GM10248 (cell line): ENCODE measurements at regions of chr9 and their contacts with region 1.

Region 1: DNA sequence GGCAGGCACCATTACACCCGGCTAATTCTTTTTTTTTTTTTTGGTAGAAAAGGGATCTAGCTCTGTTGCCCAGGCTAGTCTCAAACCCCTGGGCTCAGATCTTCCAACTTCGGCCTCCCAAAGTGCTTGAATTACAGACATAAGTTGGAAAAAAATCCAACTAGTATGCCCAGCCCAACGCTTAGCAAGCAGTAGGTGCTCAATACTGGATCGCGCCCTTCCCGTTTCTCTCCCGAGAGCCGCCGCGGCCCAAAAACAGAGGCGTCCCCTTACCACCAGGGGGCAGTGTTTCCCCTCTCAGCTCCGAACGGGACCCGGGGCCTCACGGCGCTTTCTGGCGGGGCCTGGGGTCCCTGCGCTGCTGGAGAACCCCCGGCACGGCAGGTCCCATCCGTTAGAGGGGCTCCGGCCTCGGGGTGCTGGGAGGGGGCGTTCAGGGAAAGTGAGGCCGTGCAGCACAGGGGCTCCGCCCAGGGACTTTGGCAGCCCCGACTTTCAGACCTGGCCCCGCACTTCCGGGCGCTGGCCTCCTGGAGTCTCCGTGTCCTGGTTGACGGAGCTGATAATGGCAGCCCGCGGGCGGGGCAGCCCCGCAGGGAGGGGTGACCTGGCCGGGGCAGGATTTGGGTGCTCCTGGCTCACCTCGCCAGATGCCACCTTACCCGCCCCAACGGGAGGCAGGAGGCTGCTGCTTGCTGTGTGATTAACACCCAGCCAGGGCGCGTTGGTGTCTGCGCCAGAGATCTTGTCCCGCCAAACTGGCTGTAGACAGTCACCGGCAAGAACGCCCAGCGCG is 15.2 kb downstream of the PTGES start:
- DNase-seq: peak; percentile 90
- CTCF ChIP-seq: peak; percentile 86

Region 2: GRCh38 chr9:129712634-129713401 is 24.9 kb before region 1 on chr9:
- CTCF ChIA-PET with region 1: interaction called, 10 read pairs
- POLR2A ChIA-PET with region 1: no interaction called
- DNase-seq: no peak
- CTCF ChIP-seq: no peak

Region 3: GRCh38 chr9:129751826-129752801 is 14.4 kb after region 1 on chr9:
- CTCF ChIA-PET with region 1: interaction called, 22 read pairs
- POLR2A ChIA-PET with region 1: no interaction called
- DNase-seq: no peak
- CTCF ChIP-seq: no peak

Region 4: DNA sequence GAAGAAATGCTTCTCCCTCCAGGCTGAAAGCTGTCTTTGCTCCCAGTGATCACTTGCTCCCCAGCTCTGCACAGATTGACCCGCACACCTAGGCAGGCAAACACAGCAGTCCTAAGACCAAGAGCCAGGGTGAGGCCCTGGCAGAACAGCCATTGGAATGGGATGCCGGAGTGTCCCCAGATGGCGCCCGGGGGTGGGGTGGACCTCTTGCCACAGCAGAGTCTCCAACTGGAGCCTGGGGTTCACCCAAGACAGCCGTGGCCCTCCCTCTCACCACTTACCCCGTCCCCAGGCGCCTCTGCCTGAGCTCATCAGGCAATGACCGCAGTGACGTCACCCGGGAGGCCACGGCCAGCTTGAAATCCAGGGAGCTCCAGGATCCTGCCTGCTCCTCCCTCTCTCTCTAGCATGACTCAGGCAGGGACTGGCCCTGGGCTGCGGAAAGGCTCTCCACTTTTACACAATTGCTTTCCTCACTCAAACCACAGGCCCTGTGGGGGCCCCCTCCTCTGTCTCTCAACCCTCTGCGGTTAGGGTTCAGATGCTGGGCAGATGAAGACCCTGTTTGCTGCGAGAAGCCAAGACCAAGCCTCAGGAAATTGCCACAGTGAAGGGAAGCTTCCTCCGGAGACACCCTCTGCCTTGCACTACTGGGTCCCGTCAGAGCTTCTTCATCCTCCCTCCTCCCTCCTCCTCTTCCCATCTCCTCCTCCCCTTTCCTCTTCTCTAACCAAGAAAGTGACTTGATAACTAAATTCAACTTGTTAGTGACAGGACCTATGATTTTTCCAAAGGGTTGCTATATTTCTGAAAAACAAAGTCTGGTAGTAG is 39.5 kb after region 1 on chr9:
- CTCF ChIA-PET with region 1: interaction called, 99 read pairs
- POLR2A ChIA-PET with region 1: no interaction called
- DNase-seq: no peak
- CTCF ChIP-seq: no peak

Region 5: GRCh38 chr9:129783516-129784361 is 46.1 kb after region 1 on chr9:
- CTCF ChIA-PET with region 1: interaction called, 99 read pairs
- POLR2A ChIA-PET with region 1: no interaction called
- DNase-seq: peak; percentile 88
- CTCF ChIP-seq: peak; percentile 70

Region 6: GRCh38 chr9:129796029-129796910 is 58.6 kb after region 1 on chr9:
- CTCF ChIA-PET with region 1: interaction called, 34 read pairs
- POLR2A ChIA-PET with region 1: no interaction called
- DNase-seq: no peak
- CTCF ChIP-seq: no peak